T-cell (primary cell): ENCODE measurements at regions of chr3 and their contacts with region 1.

Region 1: DNA sequence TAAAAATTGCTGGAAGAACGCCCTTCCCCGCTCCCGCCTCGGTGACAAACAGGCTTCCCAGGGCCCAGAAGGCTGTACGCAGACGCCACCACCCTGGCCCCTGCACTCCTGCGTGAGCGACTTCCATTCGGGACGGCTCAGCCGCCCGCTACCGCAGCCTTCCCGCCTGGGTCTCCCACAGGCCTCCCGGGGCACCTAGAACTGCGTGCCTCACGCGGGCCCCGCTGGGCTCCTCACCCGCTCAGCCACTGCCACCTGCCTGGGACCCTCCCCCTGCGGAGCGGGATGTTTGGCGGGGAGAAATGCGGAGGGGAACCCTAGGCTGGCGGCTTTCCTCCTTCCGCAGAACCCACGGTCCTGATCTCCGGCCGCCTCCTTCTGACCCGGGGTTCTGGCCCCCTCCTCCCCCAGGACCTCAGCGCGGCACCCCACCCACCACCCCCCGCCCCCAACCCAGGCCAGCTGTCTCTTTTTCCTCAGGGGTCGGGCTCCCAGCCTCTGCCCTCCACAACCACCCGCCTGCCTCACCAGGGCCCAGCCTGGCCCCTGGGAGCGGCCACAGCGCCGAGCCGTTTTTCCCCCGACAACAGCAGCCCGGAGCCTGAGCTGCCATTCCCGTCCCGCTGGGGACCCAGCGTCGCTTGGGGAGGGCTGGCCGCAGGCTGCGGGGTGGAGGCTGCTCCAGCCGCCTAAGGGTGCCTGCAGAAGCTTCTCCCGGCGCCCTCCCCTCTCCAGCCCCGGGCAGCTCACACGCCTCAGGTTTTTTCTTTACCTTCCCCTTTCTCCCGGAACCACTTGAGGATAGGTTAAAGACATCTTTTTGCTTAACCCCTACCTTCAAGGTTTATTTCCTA is 27.5 kb upstream of the RAB7A start:
- DNase-seq: peak in 13 of 35 experiments; percentile 2 to 33 (median 12)
- ATAC-seq: peak; percentile 69 to 78 (median 73)
- H3K4me3 ChIP-seq: peak overlapping the region; percentile 55 to 64
- H3K4me3 Mint-ChIP-seq: peak overlapping the region; percentile 67 to 78 (median 78)
- H3K27ac ChIP-seq: no peak overlapping the region
- H3K27ac Mint-ChIP-seq: no peak overlapping the region
- H3K4me1 ChIP-seq: peaks cover 0 to 12% of the 10 kb centered on the region in 2 experiments
- H3K4me1 Mint-ChIP-seq: peaks cover 1 to 6% (median 2%) of the 10 kb centered on the region in 3 donors
- H3K27me3 ChIP-seq: peaks cover 0 to 20% of the 10 kb centered on the region in 2 experiments
- H3K27me3 Mint-ChIP-seq: peaks cover 0 to 2% of the 10 kb centered on the region in 2 donors

Region 2: DNA sequence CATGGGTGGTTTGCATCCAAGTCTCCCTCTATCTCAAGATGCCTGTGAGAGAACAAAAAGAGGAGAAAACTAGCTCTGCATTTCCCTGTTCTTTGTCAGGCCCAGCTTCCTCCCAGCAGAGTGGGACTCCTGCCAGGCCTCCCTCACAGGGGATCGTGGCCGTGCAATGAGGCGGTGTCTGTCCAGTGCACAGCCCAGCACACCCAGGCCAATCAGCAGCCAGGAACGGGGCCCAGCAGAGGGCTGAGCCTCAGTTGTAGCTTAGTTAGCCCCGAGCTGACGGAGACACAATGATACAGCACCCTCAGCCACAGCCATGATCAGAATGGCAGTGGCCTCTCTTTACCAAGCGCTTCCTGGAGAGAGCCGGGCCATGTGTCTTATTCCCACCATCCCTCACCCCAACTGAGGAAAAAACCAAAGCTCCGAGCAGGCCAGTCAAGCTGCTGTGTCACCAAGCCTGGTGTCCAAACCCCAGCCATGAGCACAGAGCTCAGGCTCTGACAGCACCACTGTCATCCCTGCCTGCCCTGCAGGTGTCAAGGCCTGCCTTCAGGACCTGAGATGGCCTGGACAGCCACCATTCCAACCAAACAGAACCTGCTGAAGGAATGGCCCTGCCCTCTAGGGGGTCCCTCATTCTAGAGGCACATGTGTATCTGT is 302.8 kb before region 1 on chr3:
- CTCF ChIA-PET with region 1: no interaction called
- POLR2A ChIA-PET with region 1: no interaction called
- DNase-seq: no peak
- ATAC-seq: no peak
- H3K4me3 ChIP-seq: no peak overlapping the region
- H3K4me3 Mint-ChIP-seq: no peak overlapping the region
- H3K27ac ChIP-seq: no peak overlapping the region
- H3K27ac Mint-ChIP-seq: no peak overlapping the region
- H3K4me1 ChIP-seq: no peaks in the 10 kb centered on the region
- H3K4me1 Mint-ChIP-seq: no peaks in the 10 kb centered on the region
- H3K27me3 ChIP-seq: no peaks in the 10 kb centered on the region
- H3K27me3 Mint-ChIP-seq: no peaks in the 10 kb centered on the region

Region 3: GRCh38 chr3:128753715-128754114 is 55.3 kb after region 1 on chr3:
- CTCF ChIA-PET with region 1: no interaction called
- POLR2A ChIA-PET with region 1: interaction called in 1 of 2 experiments, 10 read pairs
- DNase-seq: no peak
- ATAC-seq: no peak
- H3K4me3 ChIP-seq: no peak overlapping the region
- H3K4me3 Mint-ChIP-seq: no peak overlapping the region
- H3K27ac ChIP-seq: no peak overlapping the region
- H3K27ac Mint-ChIP-seq: peak overlapping the region; percentile 75 to 80
- H3K4me1 ChIP-seq: peaks cover 8 to 27% of the 10 kb centered on the region in 2 experiments
- H3K4me1 Mint-ChIP-seq: peaks cover 73 to 79% (median 78%) of the 10 kb centered on the region in 3 donors
- H3K27me3 ChIP-seq: no peaks in the 10 kb centered on the region
- H3K27me3 Mint-ChIP-seq: no peaks in the 10 kb centered on the region